Naive thymus-derived CD4-positive, alpha-beta T cell (primary cell): ENCODE measurements at regions of chr2 and their contacts with region 1.

Region 1: GRCh38 chr2:239267288-239267951 is 133.4 kb downstream of the HDAC4 start:
- DNase-seq: peak; percentile 74 to 96 (median 94)
- ATAC-seq: peak; percentile 88
- H3K4me3 ChIP-seq: peak overlapping the region; percentile 85
- H3K4me3 Mint-ChIP-seq: peak overlapping the region; percentile 90 to 99 (median 95)
- H3K27ac ChIP-seq: peak overlapping the region; percentile 74
- H3K27ac Mint-ChIP-seq: peak overlapping the region; percentile 88 to 99 (median 98)
- H3K4me1 ChIP-seq: peaks cover 57 to 74% of the 10 kb centered on the region in 2 donors
- H3K4me1 Mint-ChIP-seq: peaks cover 55 to 98% (median 85%) of the 10 kb centered on the region in 7 donors
- H3K27me3 ChIP-seq: no peaks in the 10 kb centered on the region
- H3K27me3 Mint-ChIP-seq: peaks cover 0 to 4% (median 0%) of the 10 kb centered on the region in 5 donors

Region 2: DNA sequence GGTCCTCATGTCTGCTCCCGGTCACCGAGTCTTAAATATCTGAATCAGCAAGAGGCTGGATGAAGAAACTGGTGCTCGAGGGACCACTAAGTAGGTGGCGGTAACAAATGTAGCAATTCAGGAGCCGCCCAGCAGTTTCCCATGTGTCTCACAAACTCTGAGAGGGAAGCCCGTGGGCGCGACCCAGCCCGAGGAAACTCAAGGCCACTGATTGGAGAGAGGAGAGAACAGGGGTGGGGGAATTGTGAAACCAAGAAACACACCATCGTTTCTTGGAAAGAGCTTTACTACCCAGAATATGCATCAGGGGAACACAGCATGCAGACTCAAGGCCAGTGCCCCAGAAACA is 1769.6 kb before region 1 on chr2:
- CTCF ChIA-PET with region 1: no interaction called
- POLR2A ChIA-PET with region 1: no interaction called
- intact Hi-C with region 1: no loop called
- DNase-seq: no peak
- ATAC-seq: no peak
- H3K4me3 ChIP-seq: no peak overlapping the region
- H3K4me3 Mint-ChIP-seq: no peak overlapping the region
- H3K27ac ChIP-seq: no peak overlapping the region
- H3K27ac Mint-ChIP-seq: no peak overlapping the region
- H3K4me1 ChIP-seq: no peaks in the 10 kb centered on the region
- H3K4me1 Mint-ChIP-seq: peaks cover 0 to 5% (median 0%) of the 10 kb centered on the region in 7 donors
- H3K27me3 ChIP-seq: no peaks in the 10 kb centered on the region
- H3K27me3 Mint-ChIP-seq: peaks cover 16 to 29% (median 25%) of the 10 kb centered on the region in 5 donors

Region 3: DNA sequence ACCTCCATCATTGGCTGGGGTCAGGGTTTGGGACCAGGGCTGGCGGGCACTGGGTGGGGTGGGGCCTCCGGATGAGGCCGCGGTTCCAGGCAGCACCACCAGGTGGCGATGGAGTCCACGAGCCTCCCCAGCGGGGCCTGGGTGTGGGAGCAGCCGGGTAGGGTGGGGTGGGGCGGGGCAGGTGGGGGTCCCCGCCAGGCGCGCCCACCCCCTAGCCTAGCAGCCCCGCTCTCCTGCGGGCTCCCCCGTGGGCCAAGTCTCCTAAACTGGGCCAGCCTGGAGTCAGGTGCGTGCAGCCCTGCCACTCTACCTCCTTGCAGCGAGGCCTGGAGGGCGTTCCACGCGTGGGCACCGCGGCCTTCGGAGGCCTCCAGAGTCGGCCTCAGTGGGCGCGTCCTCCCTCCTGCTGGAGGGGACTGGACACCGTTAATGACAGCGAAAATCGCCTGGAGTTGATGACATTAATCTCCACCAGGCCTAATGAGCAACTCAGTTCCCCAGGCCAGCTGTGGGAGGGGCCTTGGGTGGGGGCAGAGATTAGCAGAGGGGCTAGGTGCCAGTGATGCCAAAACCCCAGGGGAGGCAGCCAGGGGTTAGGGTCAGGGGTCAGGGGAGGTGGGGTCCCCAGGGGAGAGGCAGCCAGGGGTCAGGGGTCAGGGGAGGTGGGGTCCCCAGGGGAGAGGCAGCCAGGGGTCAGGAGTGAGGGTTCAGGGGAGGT is 231.9 kb before region 1 on chr2:
- CTCF ChIA-PET with region 1: no interaction called
- POLR2A ChIA-PET with region 1: no interaction called
- intact Hi-C with region 1: loop called in 1 of 2 experiments (anchors 1 kb)
- DNase-seq: peak; percentile 30 to 79 (median 62)
- ATAC-seq: peak; percentile 85
- H3K4me3 ChIP-seq: no peak overlapping the region
- H3K4me3 Mint-ChIP-seq: no peak overlapping the region
- H3K27ac ChIP-seq: no peak overlapping the region
- H3K27ac Mint-ChIP-seq: no peak overlapping the region
- H3K4me1 ChIP-seq: no peaks in the 10 kb centered on the region
- H3K4me1 Mint-ChIP-seq: peaks cover 0 to 2% (median 0%) of the 10 kb centered on the region in 7 donors
- H3K27me3 ChIP-seq: no peaks in the 10 kb centered on the region
- H3K27me3 Mint-ChIP-seq: peaks cover 7 to 27% (median 18%) of the 10 kb centered on the region in 5 donors

Region 4: GRCh38 chr2:239216614-239217273 is 50.7 kb before region 1 on chr2:
- CTCF ChIA-PET with region 1: interaction called, 4 read pairs
- POLR2A ChIA-PET with region 1: no interaction called
- intact Hi-C with region 1: loop called in 1 of 2 experiments (anchors 10 kb)
- DNase-seq: peak in 1 of 9 donors; percentile 58
- ATAC-seq: peak; percentile 71
- H3K4me3 ChIP-seq: no peak overlapping the region
- H3K4me3 Mint-ChIP-seq: peak overlapping the region; percentile 48 to 90 (median 69)
- H3K27ac ChIP-seq: no peak overlapping the region
- H3K27ac Mint-ChIP-seq: peak overlapping the region in 8 of 9 donors; percentile 57 to 89 (median 78)
- H3K4me1 ChIP-seq: peaks cover 0 to 42% of the 10 kb centered on the region in 2 donors
- H3K4me1 Mint-ChIP-seq: peaks cover 57 to 86% (median 73%) of the 10 kb centered on the region in 7 donors
- H3K27me3 ChIP-seq: no peaks in the 10 kb centered on the region
- H3K27me3 Mint-ChIP-seq: no peaks in the 10 kb centered on the region

Region 5: DNA sequence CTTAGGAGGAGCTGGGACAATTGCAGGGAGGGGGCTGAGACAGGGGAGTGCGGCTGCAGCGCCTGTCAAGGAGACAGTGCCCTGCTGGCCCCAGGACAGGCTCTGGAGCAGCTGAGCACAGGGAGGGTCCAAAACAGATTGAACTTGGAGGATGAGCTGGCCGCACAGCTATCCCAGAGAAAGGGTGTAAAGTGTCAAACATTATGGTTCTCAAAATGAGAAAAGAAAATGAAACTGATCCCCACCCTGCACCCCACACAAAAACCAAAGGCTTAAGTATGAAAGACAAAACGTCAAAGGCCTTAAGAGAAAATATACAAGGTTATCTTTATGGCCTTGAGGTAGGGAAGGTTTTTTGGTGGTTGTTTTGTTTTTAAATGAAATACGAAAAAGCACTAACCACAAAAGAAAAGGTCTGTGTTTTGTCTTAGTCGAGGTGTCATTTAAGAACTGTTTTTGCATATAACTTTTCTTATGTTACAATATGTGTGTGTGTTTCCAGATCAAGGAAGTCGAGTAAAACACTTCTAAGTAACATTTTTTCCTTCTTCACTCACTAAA is 21.6 kb after region 1 on chr2:
- CTCF ChIA-PET with region 1: interaction called, 100 read pairs
- POLR2A ChIA-PET with region 1: interaction called, 362 read pairs
- intact Hi-C with region 1: loop called in 1 of 2 experiments (anchors 1 kb)
- DNase-seq: peak in 7 of 9 donors; percentile 63 to 87 (median 81)
- ATAC-seq: peak; percentile 82
- H3K4me3 ChIP-seq: peak overlapping the region; percentile 49
- H3K4me3 Mint-ChIP-seq: peak overlapping the region; percentile 70 to 89 (median 79)
- H3K27ac ChIP-seq: peak overlapping the region; percentile 79
- H3K27ac Mint-ChIP-seq: peak overlapping the region; percentile 92 to 99 (median 96)
- H3K4me1 ChIP-seq: peaks cover 40 to 63% of the 10 kb centered on the region in 2 donors
- H3K4me1 Mint-ChIP-seq: peaks cover 60 to 98% (median 82%) of the 10 kb centered on the region in 7 donors
- H3K27me3 ChIP-seq: no peaks in the 10 kb centered on the region
- H3K27me3 Mint-ChIP-seq: peaks cover 0 to 3% (median 0%) of the 10 kb centered on the region in 5 donors

Region 6: DNA sequence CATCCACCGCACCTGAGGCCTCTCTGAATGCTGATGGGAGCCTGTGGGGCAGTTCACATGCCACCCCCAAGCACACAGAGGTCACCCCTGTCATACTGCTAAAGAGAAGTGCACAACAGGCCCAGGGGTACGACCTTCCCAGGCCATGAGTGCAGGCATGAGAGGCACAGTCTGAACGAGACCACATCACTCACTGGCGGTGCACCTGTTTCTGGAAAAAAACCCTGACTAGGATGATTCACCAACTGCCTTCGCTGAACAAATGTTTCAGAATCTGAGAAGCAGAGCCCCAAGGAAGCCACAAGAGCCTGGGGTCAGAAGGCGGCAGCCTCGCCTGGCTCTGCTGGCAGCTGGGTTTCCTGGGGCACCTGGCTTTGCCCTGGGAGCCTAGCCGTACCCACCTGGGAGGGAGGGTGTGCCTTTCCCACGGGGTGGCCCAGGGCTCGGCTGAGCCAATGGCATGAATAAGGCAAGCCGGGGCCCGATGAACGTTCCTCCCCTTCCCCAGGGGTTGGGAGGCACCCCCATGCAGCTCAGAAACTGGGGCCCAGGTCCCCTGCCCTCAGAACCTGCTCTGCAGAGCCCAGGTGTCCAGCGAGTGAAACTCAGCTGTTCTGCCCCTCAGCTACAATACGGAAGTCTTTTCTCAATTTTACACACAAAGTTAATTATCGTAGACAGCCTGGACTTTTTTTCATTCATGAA is 59.6 kb after region 1 on chr2:
- CTCF ChIA-PET with region 1: interaction called, 5 read pairs
- POLR2A ChIA-PET with region 1: interaction called, 7 read pairs
- intact Hi-C with region 1: loop called (anchors 1 to 2 kb)
- DNase-seq: peak in 8 of 9 donors; percentile 54 to 81 (median 72)
- ATAC-seq: peak; percentile 83
- H3K4me3 ChIP-seq: no peak overlapping the region
- H3K4me3 Mint-ChIP-seq: peak overlapping the region; percentile 55 to 79 (median 71)
- H3K27ac ChIP-seq: peak overlapping the region; percentile 68
- H3K27ac Mint-ChIP-seq: peak overlapping the region; percentile 89 to 100 (median 95)
- H3K4me1 ChIP-seq: peaks cover 20 to 65% of the 10 kb centered on the region in 2 donors
- H3K4me1 Mint-ChIP-seq: peaks cover 54 to 99% (median 89%) of the 10 kb centered on the region in 7 donors
- H3K27me3 ChIP-seq: no peaks in the 10 kb centered on the region
- H3K27me3 Mint-ChIP-seq: no peaks in the 10 kb centered on the region

Region 7: DNA sequence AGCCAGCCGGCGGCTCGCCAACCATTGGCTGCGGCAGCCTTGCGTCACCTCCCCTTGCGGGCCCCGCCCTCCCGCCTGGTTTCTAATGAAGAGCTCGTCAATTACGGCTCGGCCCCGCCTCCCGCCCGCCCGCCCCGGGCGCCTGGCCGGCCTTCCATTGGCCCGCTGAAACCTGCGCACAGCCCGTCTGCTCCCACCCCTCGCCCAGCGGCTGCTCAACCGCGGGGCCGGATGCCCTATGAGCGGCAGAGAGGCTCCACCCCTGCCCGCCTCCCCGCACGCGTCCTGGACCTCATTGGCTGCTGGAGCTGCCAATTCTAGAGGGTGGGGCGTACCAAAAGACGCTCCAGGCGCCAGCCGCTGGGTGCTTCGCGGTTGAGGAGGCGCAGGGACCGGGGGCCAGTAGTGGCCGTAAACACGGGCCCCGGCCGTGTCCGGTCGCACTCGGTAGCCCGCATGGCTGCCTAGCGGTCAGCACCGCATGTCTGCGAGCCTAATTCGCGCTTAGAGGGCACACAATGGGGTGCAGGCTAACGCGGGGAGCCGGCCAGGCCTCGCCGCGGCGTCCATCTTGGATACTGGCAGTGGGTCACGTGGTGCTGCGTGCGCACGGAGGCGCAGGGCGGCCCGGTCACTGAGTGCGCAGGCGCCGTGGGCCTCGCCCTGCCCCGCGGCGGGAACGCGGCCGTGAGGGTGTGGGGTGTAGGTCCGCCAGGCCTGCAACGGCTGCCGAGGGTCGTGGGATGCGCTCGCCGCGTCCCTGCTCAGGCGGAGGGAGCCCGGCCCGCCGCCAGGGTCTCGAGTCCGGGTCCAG is 133.9 kb after region 1 on chr2:
- CTCF ChIA-PET with region 1: interaction called, 65 read pairs
- POLR2A ChIA-PET with region 1: interaction called, 32 read pairs
- intact Hi-C with region 1: loop called (anchors 1 kb)
- DNase-seq: peak; percentile 98 to 100 (median 100)
- ATAC-seq: peak; percentile 92
- H3K4me3 ChIP-seq: peak overlapping the region; percentile 100
- H3K4me3 Mint-ChIP-seq: peak overlapping the region; percentile 86 to 96 (median 92)
- H3K27ac ChIP-seq: peak overlapping the region; percentile 97
- H3K27ac Mint-ChIP-seq: peak overlapping the region; percentile 96 to 99 (median 99)
- H3K4me1 ChIP-seq: peaks cover 17 to 26% of the 10 kb centered on the region in 2 donors
- H3K4me1 Mint-ChIP-seq: peaks cover 28 to 51% (median 43%) of the 10 kb centered on the region in 7 donors
- H3K27me3 ChIP-seq: no peaks in the 10 kb centered on the region
- H3K27me3 Mint-ChIP-seq: peaks cover 0 to 16% (median 0%) of the 10 kb centered on the region in 5 donors

Region 8: GRCh38 chr2:240021488-240022104 is 754.2 kb after region 1 on chr2:
- CTCF ChIA-PET with region 1: no interaction called
- POLR2A ChIA-PET with region 1: no interaction called
- intact Hi-C with region 1: loop called in 1 of 2 experiments (anchors 10 kb)
- DNase-seq: peak; percentile 18 to 68 (median 51)
- ATAC-seq: peak; percentile 43
- H3K4me3 ChIP-seq: no peak overlapping the region
- H3K4me3 Mint-ChIP-seq: no peak overlapping the region
- H3K27ac ChIP-seq: no peak overlapping the region
- H3K27ac Mint-ChIP-seq: peak overlapping the region in 1 of 9 donors; percentile 32
- H3K4me1 ChIP-seq: peaks cover 8 to 15% of the 10 kb centered on the region in 2 donors
- H3K4me1 Mint-ChIP-seq: peaks cover 15 to 39% (median 35%) of the 10 kb centered on the region in 7 donors
- H3K27me3 ChIP-seq: no peaks in the 10 kb centered on the region
- H3K27me3 Mint-ChIP-seq: peaks cover 0 to 2% (median 0%) of the 10 kb centered on the region in 5 donors